AG04450 (cell line): ENCODE measurements at regions of chr11 and their contacts with region 1.

Region 1: GRCh38 chr11:36746886-36747710 is 149.1 kb upstream of the RAG2 start:
- DNase-seq: peak; percentile 88
- H3K4me3 ChIP-seq: no peak overlapping the region
- H3K27ac ChIP-seq: no peak overlapping the region
- H3K27me3 ChIP-seq: peaks cover 10% of the 10 kb centered on the region
- CTCF ChIP-seq: peak; percentile 100

Region 2: DNA sequence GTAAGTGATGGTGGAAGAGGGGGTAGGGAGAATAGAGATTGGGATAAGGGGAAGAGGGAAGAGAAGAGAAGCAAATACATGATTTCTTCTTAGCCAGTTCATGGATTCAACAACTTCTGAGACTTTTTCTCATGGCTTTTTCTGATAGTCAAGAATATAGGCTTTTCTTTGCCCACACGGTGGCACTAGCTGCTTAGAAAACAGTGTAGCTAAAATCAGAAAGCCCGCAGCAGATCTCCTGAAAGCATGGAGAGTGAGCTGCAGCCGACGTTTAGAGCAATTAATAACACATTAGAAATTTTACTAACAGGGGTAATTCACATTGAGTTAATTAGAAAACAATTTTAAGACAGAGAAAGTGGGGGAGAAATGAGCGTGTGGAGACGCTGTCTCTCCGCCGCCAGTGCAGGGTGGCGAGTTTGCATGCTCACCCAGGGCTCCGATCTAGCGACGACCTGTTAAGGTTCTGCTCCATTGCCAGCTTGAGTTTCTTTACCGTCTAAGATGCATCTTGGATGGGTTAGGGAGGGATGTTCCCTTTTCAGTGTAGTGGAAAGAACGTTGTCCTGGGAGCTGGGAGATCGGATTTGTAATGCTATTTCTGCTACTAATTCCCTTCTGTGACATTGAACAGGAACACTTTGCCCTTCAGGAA is 182.6 kb before region 1 on chr11:
- CTCF ChIA-PET with region 1: interaction called, 199 read pairs
- POLR2A ChIA-PET with region 1: no interaction called
- DNase-seq: peak; percentile 11
- H3K4me3 ChIP-seq: peak overlapping the region; percentile 18; the same call in 1 of the 2 replicates
- H3K27ac ChIP-seq: no peak overlapping the region
- H3K27me3 ChIP-seq: peaks cover 16% of the 10 kb centered on the region
- CTCF ChIP-seq: peak; percentile 76

Region 3: DNA sequence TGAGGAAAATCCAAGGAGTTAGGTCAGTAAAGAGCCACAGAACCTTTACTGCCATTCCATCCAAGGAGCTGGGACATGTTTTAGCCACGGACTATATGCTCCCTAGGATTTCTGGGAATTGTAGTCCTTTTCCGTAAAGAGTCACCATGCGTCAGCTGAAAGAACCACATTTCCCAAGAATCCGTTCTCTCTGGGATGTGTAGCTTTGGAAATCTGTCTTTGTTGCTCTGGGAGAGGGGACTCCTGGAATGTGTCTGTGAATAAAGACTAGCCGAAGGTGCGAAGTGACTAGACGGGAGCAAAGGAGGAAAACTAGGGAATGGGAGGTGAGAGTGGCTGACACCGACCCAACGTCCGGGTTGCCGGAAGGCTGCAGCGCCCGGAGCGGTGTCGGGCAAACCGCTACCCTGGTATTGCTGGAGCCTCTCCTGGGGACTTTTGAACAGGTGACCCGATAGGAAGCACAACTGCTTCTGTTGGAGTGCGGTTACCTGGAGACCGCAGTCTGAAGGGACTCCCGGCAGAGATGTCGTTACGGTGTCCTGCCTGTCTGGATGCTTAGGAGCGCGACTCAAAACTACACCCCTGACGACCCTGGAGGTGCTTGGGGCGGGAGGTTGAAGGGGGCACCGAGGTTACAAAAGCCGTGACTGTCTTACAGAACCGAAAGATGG is 152.6 kb before region 1 on chr11 and contains the start of gene IFTAP:
- CTCF ChIA-PET with region 1: interaction called, 13 read pairs
- POLR2A ChIA-PET with region 1: no interaction called
- DNase-seq: peak; percentile 72
- H3K4me3 ChIP-seq: peak within 1 kb of the TSS; percentile 95
- H3K27ac ChIP-seq: no peak within 1 kb of the TSS
- H3K27me3 ChIP-seq: no peaks in the 10 kb centered on the region
- CTCF ChIP-seq: no peak; the same call in 1 of the 2 replicates
- polyA plus RNA-seq, gene IFTAP: 40.6 and 56.2 TPM in 2 replicates

Region 4: GRCh38 chr11:36693139-36693843 is 53.8 kb before region 1 on chr11:
- CTCF ChIA-PET with region 1: interaction called, 31 read pairs
- POLR2A ChIA-PET with region 1: no interaction called
- DNase-seq: no peak
- H3K4me3 ChIP-seq: no peak overlapping the region
- H3K27ac ChIP-seq: no peak overlapping the region
- H3K27me3 ChIP-seq: peaks cover 7% of the 10 kb centered on the region
- CTCF ChIP-seq: no peak

Region 5: DNA sequence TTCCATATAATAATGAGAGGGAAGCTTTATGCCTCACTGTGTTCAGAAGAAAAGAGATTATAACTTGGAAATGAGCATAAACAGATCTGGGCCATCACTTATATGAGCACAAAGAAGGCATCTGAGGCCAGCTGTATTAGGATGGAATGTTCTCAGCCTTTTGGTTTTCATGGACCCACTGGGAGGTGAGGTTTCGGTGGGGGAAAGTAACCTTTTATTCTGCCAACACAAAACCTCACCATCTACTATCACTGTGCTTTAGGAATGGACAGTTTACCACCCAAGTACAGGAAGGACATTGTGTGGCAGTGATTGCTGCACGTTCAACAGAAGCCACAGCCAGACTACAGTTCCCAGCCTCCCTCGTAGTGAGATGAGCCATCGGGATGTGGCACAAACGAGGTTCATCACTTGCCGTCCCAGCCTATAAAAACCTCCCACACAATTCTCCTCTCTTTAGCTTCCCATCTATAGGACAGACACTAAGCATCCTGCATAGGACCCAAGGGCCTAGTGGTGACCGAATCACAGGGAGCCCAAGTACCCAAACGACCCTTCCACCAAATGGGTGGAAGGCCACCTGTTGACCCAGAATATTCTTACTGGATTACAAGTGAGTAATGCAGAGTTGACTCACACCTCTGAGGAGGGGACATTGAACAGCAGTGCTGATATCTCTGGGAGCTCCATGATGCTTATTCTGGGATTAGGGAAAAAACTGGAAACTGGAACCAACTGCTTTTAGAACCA is 27.6 kb before region 1 on chr11:
- CTCF ChIA-PET with region 1: interaction called, 22 read pairs
- POLR2A ChIA-PET with region 1: no interaction called
- DNase-seq: no peak
- H3K4me3 ChIP-seq: no peak overlapping the region
- H3K27ac ChIP-seq: no peak overlapping the region
- H3K27me3 ChIP-seq: no peaks in the 10 kb centered on the region
- CTCF ChIP-seq: no peak

Region 6: DNA sequence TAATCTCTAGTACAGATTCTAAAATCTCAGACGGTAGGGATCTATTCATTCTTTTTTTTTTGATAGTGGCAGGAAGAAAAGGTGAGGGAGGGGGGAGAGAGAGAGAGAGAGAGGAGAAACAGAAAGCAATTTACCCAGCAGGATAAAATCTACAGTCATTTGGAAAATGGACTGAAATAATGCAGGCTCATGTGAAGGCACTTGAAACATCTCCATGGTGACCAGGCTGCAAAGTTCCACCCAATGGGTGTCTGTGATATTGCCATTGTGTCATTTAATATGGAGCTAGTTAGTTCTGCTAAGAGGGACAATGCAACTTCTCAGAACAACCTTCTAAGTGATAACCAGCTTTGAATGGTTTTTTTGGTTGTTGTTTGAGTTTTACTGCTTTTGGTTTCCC is 16.1 kb after region 1 on chr11:
- CTCF ChIA-PET with region 1: interaction called, 27 read pairs
- POLR2A ChIA-PET with region 1: no interaction called
- DNase-seq: no peak
- H3K4me3 ChIP-seq: no peak overlapping the region
- H3K27ac ChIP-seq: no peak overlapping the region
- H3K27me3 ChIP-seq: no peaks in the 10 kb centered on the region
- CTCF ChIP-seq: no peak

Region 7: DNA sequence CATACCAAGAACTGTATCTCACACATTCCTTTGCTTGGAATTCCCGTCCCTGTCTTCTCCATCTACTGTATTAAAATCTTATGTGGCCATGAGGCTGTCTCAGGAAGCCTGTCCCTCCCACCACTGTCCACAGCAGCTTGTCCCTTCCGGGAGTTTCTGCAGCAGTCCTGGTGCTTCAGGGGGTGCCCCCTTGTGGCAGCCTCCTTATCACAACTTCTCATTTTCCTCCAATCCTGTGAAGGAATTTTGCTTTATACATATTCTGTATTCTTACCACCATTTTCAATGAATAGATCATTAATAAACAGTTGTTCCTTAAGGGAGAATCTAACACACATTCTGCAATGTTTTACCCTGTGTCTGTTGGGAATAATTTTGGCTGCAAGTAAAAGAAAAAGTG is 71.3 kb after region 1 on chr11:
- CTCF ChIA-PET with region 1: interaction called, 10 read pairs
- POLR2A ChIA-PET with region 1: no interaction called
- DNase-seq: no peak
- H3K4me3 ChIP-seq: no peak overlapping the region
- H3K27ac ChIP-seq: no peak overlapping the region
- H3K27me3 ChIP-seq: no peaks in the 10 kb centered on the region
- CTCF ChIP-seq: peak; percentile 47